ENCODE measurements at regions of chr3 and their contacts with region 1.

Region 1: GRCh38 chr3:52339612-52340011 is 23.5 kb downstream of the DNAH1 start:
- H3K4me3 ChIP-seq: no peak overlapping the region
- H3K27ac ChIP-seq: no peak overlapping the region
- H3K4me1 ChIP-seq: no peaks in the 10 kb centered on the region
- CTCF ChIP-seq: peak; percentile 69; the same call in 1 of the 2 replicates

Region 2: GRCh38 chr3:52220380-52221026 is 119.1 kb before region 1 on chr3:
- CTCF ChIA-PET with region 1: interaction called, 95 read pairs
- POLR2A ChIA-PET with region 1: no interaction called
- H3K4me3 ChIP-seq: no peak overlapping the region
- H3K27ac ChIP-seq: no peak overlapping the region
- H3K4me1 ChIP-seq: no peaks in the 10 kb centered on the region
- CTCF ChIP-seq: peak; percentile 58

Region 3: DNA sequence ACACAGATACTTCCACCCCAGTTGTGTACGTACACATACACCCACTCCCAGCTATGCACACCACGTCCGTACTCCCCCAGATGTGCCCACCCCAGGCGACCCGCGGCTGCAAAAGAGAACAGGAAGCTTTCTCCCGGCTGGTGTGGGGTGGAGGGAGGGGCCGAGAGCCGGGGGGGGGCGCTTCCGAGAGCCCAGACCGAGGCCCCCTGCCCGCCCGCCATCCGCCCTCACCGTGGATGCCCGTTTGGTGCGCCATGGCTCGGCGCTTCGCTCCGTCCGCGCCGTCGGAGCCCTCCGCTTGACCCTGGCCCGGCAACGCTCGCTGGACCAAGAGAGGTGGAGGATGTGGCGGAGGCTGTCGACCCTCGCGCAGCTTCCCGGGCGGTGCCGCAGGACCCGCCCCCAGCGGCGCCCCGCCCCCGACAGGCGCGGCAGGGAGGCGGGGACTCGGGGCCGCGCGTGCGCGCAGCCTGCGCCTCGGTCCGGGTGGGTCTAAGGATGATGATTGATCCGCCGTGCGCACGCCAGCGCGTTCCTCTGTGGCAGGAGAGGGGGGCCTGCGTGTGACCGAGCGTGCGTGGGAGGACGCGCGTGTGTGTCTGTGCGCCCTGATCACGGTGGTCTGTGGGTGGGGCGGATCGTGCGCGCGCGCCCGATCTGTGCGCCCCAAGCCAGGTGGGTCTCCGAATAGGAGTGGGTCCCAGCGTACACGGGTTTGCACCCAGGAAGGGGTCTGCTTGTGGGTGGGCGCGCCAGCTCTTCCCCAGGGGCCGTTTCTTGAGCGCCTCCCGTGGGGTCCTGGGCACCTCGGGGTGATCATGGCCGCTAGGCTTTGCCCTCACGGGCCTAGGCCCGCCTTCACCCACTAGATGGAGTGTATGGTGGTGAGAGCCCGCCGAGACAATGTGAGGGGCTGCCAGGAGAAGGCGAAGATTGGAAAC is 100.6 kb before region 1 on chr3 and contains the start of gene TWF2:
- CTCF ChIA-PET with region 1: interaction called, 23 read pairs
- POLR2A ChIA-PET with region 1: interaction called, 3 read pairs
- H3K4me3 ChIP-seq: peak within 1 kb of the TSS; percentile 95
- H3K27ac ChIP-seq: peak within 1 kb of the TSS; percentile 73; the same call in 1 of the 2 replicates
- H3K4me1 ChIP-seq: no peaks in the 10 kb centered on the region
- CTCF ChIP-seq: peak; percentile 82

Region 4: DNA sequence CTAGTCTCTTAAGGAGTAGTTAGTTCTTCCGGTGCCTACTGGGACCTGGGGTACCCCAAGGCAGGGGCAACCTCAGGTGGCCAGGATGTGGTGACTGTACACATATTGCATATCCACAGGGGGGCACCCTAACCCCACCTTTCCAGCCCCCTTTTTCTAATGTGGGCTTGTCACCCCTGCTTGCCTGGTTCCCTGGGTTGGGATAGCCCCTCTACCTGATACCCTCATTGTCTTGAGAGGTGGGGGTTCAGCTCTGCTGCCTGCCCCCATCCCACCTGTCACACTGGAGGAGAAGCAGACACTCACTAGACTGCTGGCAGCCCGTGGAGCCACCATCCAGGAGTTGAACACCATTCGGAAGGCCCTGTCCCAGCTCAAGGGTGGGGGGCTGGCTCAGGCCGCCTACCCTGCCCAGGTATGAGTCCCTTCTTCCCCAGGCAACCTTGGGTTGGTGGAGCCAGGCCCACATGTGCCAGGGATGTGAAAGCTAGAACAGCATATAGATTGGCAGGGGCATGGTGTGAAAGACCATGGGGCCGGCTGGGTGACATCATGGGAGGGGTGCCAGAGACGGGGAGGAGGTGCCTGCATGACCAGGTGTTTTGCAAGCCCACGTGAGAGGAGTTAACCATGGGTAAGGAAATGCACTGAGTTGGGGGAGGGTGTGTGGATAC is 48.0 kb before region 1 on chr3:
- CTCF ChIA-PET with region 1: interaction called, 33 read pairs
- POLR2A ChIA-PET with region 1: interaction called, 3 read pairs
- H3K4me3 ChIP-seq: no peak overlapping the region
- H3K27ac ChIP-seq: no peak overlapping the region
- H3K4me1 ChIP-seq: no peaks in the 10 kb centered on the region
- CTCF ChIP-seq: peak; percentile 45; the same call in 1 of the 2 replicates

Region 5: DNA sequence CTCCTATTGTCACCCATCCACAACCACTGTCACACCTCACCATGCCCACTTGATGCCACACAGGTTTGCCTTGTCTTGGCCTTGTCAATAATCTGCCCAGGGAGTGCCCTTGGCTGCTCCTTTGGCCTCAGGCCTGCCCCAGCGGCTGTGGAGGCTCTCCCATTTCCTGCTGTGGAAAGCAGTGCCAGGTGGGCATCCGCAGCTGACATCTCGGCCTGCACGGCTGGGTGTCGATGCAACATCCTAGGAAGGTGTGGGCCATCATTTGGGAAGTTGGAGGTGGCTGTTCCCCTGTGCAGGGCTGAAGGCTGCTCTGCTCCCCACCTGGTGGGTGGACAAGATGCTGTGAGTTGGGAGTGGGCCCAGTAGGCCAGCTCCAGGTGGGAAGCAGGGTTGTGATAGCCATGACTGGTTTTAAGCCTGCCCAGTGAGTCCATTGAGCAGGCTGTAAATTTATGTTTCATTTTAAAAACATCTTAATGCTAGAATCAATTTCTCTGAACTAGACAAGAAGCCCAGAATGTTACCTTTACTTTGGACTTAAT is 11.0 kb before region 1 on chr3:
- CTCF ChIA-PET with region 1: interaction called, 23 read pairs
- POLR2A ChIA-PET with region 1: no interaction called
- H3K4me3 ChIP-seq: no peak overlapping the region
- H3K27ac ChIP-seq: no peak overlapping the region
- H3K4me1 ChIP-seq: no peaks in the 10 kb centered on the region
- CTCF ChIP-seq: no peak